PC-9 (cell line): ENCODE measurements at regions of chr2 and their contacts with region 1.

Region 1: DNA sequence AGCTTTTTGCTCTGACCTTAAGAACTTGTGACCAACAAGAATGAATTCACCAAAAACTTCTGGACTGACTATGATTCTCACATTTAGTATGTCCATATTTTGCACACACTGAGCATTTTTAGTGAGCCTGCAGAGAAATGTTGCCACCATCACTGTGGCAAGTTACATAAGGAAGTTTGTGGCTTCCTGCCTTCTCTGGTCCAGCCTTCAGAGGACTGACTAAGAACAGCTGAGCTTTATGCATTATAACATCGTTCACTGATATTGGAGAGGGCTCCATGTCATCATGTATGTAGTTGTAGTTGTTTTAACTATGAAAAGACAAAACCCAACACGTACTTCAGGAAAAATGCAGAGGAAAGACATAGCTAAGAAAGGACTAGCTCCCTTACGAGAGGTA is 218.0 kb upstream of the CRIM1 start:
- DNase-seq: no peak
- H3K4me3 ChIP-seq: no peak overlapping the region
- H3K27ac ChIP-seq: no peak overlapping the region
- H3K4me1 ChIP-seq: no peaks in the 10 kb centered on the region
- H3K27me3 ChIP-seq: no peaks in the 10 kb centered on the region
- CTCF ChIP-seq: no peak

Region 2: DNA sequence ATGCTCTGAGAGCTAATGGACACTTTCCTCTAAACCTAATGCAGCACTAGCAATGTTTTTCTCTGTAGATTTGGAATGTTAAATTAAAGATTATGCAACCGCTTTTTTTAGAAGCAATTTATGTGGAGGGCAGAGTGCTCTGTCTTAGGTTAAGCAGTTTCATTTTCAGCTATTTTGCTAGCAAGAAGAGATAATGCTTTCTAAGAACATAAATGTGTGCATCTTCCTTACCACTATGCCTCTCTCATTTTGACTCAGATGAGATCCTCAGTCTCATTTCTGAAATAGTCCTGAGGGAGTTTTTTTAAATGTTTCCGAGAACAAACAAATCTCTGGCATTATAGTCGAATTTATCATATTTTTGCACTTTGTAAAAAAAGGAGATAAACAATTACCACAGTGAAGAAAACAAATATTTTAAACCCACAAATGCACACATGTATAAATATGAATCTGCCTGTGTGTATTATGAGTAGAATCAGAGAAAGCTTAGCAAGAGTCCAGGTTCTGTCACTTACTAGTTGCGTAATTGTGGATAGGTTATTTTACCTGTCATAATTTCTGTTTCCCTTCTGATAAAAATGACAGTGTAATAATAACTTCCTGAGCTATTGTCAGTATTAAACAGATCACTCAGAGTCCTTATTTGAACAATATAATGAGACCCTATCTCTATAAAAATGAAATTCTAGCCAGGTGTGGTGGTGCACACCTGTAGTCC is 10.2 kb after region 1 on chr2:
- CTCF ChIA-PET with region 1: no interaction called
- POLR2A ChIA-PET with region 1: no interaction called
- intact Hi-C with region 1: loop called (anchors 1 kb)
- DNase-seq: no peak
- H3K4me3 ChIP-seq: no peak overlapping the region
- H3K27ac ChIP-seq: no peak overlapping the region
- H3K4me1 ChIP-seq: no peaks in the 10 kb centered on the region
- H3K27me3 ChIP-seq: no peaks in the 10 kb centered on the region
- CTCF ChIP-seq: no peak

Region 3: GRCh38 chr2:36307441-36307840 is 169.8 kb after region 1 on chr2:
- CTCF ChIA-PET with region 1: no interaction called
- POLR2A ChIA-PET with region 1: no interaction called
- intact Hi-C with region 1: no loop called
- DNase-seq: no peak
- H3K4me3 ChIP-seq: no peak overlapping the region
- H3K27ac ChIP-seq: no peak overlapping the region
- H3K4me1 ChIP-seq: no peaks in the 10 kb centered on the region
- H3K27me3 ChIP-seq: no peaks in the 10 kb centered on the region
- CTCF ChIP-seq: no peak

Region 4: DNA sequence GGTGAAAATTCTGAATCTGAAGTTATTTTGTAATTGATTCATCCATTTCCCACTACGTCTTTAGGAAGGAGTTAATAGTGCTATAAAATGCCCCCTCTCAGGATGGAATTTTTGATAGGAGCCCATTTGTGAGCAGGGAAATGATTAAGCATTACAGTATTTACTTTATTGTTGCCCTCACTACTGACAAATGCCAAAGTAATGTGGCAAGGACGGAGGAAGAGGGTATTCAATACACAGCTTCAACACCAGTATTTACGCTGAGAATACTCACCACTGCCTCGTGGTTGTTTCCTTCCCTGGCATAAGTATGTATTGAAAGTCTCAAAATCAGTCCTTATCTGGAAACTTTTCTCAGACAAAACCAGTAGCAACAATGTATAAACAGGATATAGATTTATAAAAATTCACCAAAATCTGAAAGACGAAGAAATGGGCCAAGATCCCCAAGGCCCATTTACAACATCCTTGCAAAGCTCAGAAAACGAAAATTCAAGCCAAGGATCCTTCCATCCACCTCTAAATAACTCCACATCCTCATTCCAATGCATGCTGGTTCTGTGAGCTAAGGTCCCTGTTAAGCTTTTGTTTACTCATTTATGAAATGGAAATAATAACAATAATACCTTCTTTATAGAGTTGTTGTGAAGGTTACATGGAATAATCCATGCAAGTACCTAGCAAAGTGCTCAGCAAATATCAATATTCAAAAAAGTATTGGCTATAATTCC is 431.1 kb after region 1 on chr2:
- CTCF ChIA-PET with region 1: interaction called, 12 read pairs
- POLR2A ChIA-PET with region 1: no interaction called
- intact Hi-C with region 1: no loop called
- DNase-seq: peak in 1 of 2 experiments; percentile 72
- H3K4me3 ChIP-seq: no peak overlapping the region; the same call in 1 of the 2 replicates
- H3K27ac ChIP-seq: peak overlapping the region; percentile 69
- H3K4me1 ChIP-seq: peaks cover 46% of the 10 kb centered on the region
- H3K27me3 ChIP-seq: no peaks in the 10 kb centered on the region
- CTCF ChIP-seq: no peak